ENCODE measurements at regions of chr19 and their contacts with region 1.

Region 1: DNA sequence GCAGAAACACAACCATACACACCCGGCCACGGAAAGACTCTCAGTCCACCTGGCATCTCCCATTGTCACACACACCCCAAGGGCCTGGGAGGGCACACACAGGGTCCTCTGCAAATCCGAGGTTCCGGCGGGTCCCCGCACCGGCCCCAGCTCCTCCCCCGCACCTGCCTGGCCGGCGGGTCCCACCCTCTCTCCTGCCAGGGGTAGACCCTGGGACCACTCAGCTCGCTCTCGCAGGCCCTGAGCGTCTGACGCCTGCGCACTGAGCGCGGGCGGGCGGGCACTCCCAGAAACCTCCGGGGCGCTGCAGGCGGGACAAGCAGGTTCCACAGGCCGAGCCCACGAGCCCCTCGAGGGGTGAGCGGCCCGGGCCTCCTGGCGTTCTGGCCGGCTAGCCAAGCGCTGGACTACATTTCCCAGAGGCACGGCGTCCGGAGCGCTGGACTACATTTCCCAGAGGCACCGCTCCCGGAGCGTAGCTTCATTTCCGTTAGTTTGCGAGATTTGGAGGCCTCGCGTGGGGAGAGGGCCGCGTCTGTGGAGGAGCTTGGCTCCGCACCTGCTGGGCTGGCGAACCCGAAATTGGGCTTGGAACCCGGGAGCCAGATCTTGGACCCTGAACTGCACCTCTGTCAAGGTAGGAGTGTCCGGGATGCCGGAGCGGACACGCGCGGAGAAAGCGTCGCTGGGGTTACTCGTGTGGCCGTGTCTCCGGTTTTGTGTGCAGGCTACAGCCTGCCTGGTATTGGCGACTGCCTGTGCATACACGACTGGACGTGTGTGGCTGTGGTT is at the start of gene ZNF420:
- DNase-seq: peak; percentile 92
- ATAC-seq: peak; percentile 99
- H3K4me3 ChIP-seq: peak within 1 kb of the TSS; percentile 84 to 91 (median 87)
- H3K27ac ChIP-seq: peak within 1 kb of the TSS; percentile 69
- H3K4me1 ChIP-seq: peaks cover 14% of the 10 kb centered on the region
- H3K27me3 ChIP-seq: no peaks in the 10 kb centered on the region; a peak in 1 of 5 replicates
- CTCF ChIP-seq: no peak
- EP300 ChIP-seq: peak; percentile 6 to 12; a peak in 1 of 4 replicates
- POLR2A ChIP-seq: peak; percentile 10 to 77; a peak in 3 of 4 replicates
- RAD21 ChIP-seq: peak; percentile 34; the same call in 1 of the 2 replicates
- total RNA-seq, gene ZNF420: 6.6 and 11.1 TPM in 2 replicates

Region 2: GRCh38 chr19:36214386-36215275 is 863.5 kb before region 1 on chr19 and contains the starts of genes ZNF146 and ZNF565:
- CTCF ChIA-PET with region 1: no interaction called
- POLR2A ChIA-PET with region 1: interaction called, 3 read pairs
- in situ Hi-C with region 1: no loop called
- intact Hi-C with region 1: loop called (anchors 5 kb)
- DNase-seq: peak; percentile 98
- ATAC-seq: peak; percentile 96
- H3K4me3 ChIP-seq: peak within 1 kb of the TSS; percentile 78 to 97 (median 80)
- H3K27ac ChIP-seq: peak within 1 kb of the TSS; percentile 98
- H3K4me1 ChIP-seq: peaks cover 41% of the 10 kb centered on the region
- H3K27me3 ChIP-seq: peaks cover 0 to 3% of the 10 kb centered on the region in 2 experiments; a peak in 1 of 5 replicates
- CTCF ChIP-seq: peak; percentile 4; the same call in 1 of the 2 replicates
- EP300 ChIP-seq: no peak
- POLR2A ChIP-seq: peak; percentile 55 to 91; a peak in 3 of 4 replicates
- RAD21 ChIP-seq: no peak
- total RNA-seq, gene ZNF146: 52.7 and 93.3 TPM in 2 replicates
- total RNA-seq, gene ZNF565: 5.2 and 6.0 TPM in 2 replicates

Region 3: DNA sequence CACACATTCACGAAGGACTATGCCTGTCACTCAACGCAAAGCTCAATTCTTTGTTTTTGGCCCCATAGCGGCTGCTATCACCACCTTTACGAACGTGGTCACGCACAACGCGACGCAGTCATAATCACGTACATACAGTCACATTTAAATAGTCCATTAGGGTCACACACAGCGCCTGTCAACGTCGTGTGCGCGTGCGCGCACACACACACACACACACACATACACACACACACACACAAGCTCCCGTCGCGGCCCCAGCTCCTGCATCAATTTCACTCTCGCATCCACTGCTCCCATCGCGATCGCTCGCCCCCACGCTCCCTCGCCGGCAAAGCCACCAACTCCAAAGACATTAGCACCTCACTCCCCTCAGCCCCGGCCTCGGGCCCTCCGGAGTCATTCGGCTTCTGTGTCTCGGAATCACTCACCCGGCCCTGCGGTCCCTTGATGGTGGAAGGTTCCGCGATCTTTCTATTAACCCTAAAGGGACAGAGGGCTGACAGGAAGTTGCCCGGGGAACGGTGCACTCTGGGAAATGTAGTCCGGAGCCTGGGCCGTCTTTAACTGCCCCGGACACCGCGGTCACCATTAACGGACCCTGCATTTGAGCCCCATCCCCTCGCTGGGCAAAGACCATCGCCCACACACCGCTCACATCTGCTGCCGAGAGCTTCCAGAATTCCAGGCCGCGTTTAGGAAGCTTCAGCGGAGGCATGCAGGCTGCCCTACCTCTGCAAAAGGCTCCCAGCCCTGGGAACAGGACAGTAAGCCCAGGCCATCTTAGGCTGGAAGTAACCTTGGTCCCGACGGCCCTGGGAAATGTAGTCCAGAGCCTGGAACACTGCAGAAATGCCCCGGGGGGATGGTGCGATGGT is 240.0 kb before region 1 on chr19 and contains the start of gene ZNF790:
- CTCF ChIA-PET with region 1: no interaction called
- POLR2A ChIA-PET with region 1: interaction called, 17 read pairs
- in situ Hi-C with region 1: no loop called
- intact Hi-C with region 1: no loop called
- DNase-seq: peak; percentile 89
- ATAC-seq: peak; percentile 96
- H3K4me3 ChIP-seq: peak within 1 kb of the TSS; percentile 77 to 85 (median 84)
- H3K27ac ChIP-seq: peak within 1 kb of the TSS; percentile 86
- H3K4me1 ChIP-seq: peaks cover 19% of the 10 kb centered on the region
- H3K27me3 ChIP-seq: no peaks in the 10 kb centered on the region; a peak in 1 of 5 replicates
- CTCF ChIP-seq: no peak
- EP300 ChIP-seq: 0 out of 4 replicates have a peak, but pooled peaks of 1 of the 2 experiments have one; percentile 16
- POLR2A ChIP-seq: peak; percentile 61 to 78; a peak in 3 of 4 replicates
- RAD21 ChIP-seq: 0 out of 2 replicates have a peak, but pooled peaks have one; percentile 23
- total RNA-seq, gene ZNF790: 5.3 and 8.5 TPM in 2 replicates

Region 4: DNA sequence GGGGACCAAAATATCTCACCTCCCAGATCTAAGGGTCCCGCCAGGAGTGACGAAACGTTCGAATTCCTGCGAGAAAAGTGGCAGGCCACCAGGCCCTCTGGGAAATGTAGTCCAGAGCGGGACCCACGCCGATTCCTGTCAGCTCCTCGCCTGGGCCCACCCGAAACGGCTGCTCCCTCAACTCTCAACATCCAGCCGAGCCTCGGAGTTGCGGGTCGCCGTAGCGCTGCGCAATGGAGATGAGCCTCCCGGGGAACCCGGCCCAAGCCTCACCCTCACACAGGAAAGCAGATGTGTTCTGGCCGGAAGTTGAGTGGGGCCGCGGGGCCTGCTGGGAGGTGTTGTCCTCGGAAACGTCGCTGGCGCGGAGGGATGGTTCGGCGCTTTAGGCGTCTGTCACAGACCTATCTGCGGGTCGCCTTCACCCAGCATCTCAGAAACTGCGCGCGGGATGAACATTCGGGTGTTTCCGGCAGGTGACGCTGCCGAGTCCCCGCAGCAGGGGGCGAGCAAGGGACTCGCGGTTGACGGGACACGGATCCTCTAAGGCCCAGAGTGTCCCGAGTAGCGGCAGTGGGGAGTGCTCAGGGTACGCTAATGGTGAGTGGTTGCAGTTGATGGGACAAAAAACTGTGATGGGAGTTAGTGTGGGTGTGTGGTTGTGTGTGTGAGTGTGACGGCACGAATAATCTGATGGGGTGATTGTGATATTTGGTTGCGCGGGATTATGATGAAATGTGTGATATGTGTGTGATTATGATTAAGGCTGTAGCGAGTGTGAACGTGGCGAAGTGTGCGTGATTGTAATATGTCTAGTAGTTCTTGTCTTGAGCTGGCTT is 161.9 kb before region 1 on chr19 and contains the starts of genes ZNF568 and ZNF829:
- CTCF ChIA-PET with region 1: no interaction called
- POLR2A ChIA-PET with region 1: no interaction called
- in situ Hi-C with region 1: no loop called
- intact Hi-C with region 1: loop called (anchors 1 kb)
- DNase-seq: peak; percentile 69
- ATAC-seq: peak; percentile 98
- H3K4me3 ChIP-seq: peak within 1 kb of the TSS; percentile 63 to 74 (median 73); a peak in 5 of 6 replicates
- H3K27ac ChIP-seq: peak within 1 kb of the TSS; percentile 66
- H3K4me1 ChIP-seq: no peaks in the 10 kb centered on the region
- H3K27me3 ChIP-seq: no peaks in the 10 kb centered on the region
- CTCF ChIP-seq: peak; percentile 76
- EP300 ChIP-seq: no peak
- POLR2A ChIP-seq: no peak
- RAD21 ChIP-seq: no peak
- total RNA-seq, gene ZNF568: 1.00 and 1.9 TPM in 2 replicates
- total RNA-seq, gene ZNF829: 0.86 and 1.6 TPM in 2 replicates

Region 5: DNA sequence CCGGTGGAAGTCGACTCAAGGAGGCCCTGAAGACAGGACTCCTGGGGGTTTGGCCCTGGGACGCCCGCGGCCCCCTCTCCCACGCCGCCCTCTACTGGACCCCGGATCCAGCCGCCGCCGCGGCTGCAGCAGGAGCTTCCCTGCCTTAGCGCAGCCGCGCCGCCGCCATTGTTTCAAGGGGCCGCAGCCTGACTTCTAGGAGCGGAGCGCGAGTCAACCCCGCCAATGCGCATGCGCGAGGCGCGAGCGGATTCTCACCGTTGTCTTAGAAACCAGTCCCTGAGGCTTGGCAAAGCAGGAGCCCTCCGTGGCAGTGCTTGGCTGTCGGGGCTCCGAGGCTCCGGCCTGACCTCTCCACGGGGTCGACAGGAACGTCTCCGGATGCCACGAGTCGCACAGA is 19.0 kb before region 1 on chr19:
- CTCF ChIA-PET with region 1: no interaction called
- POLR2A ChIA-PET with region 1: no interaction called
- in situ Hi-C with region 1: no loop called
- intact Hi-C with region 1: no loop called
- DNase-seq: no peak
- ATAC-seq: no peak
- H3K4me3 ChIP-seq: no peak overlapping the region
- H3K27ac ChIP-seq: no peak overlapping the region
- H3K4me1 ChIP-seq: no peaks in the 10 kb centered on the region
- H3K27me3 ChIP-seq: no peaks in the 10 kb centered on the region
- CTCF ChIP-seq: no peak
- EP300 ChIP-seq: no peak
- POLR2A ChIP-seq: no peak
- RAD21 ChIP-seq: no peak

Region 6: GRCh38 chr19:37136111-37136510 is 58.0 kb after region 1 on chr19:
- CTCF ChIA-PET with region 1: no interaction called
- POLR2A ChIA-PET with region 1: no interaction called
- in situ Hi-C with region 1: no loop called
- intact Hi-C with region 1: loop called (anchors 2 kb)
- DNase-seq: no peak
- ATAC-seq: no peak
- H3K4me3 ChIP-seq: no peak overlapping the region
- H3K27ac ChIP-seq: no peak overlapping the region
- H3K4me1 ChIP-seq: no peaks in the 10 kb centered on the region
- H3K27me3 ChIP-seq: no peaks in the 10 kb centered on the region
- CTCF ChIP-seq: no peak
- EP300 ChIP-seq: no peak
- POLR2A ChIP-seq: no peak
- RAD21 ChIP-seq: no peak

Region 7: GRCh38 chr19:37172368-37173366 is 94.5 kb after region 1 on chr19 and contains the start of gene ZNF585A:
- CTCF ChIA-PET with region 1: no interaction called
- POLR2A ChIA-PET with region 1: interaction called, 4 read pairs
- in situ Hi-C with region 1: no loop called
- intact Hi-C with region 1: loop called (anchors 1 kb)
- DNase-seq: peak; percentile 97
- ATAC-seq: peak; percentile 99
- H3K4me3 ChIP-seq: peak within 1 kb of the TSS; percentile 64 to 95 (median 82)
- H3K27ac ChIP-seq: peak within 1 kb of the TSS; percentile 54
- H3K4me1 ChIP-seq: no peaks in the 10 kb centered on the region; the same call in 1 of the 2 replicates
- H3K27me3 ChIP-seq: no peaks in the 10 kb centered on the region; a peak in 1 of 5 replicates
- CTCF ChIP-seq: peak; percentile 49
- EP300 ChIP-seq: no peak
- POLR2A ChIP-seq: peak; percentile 55 to 68
- RAD21 ChIP-seq: no peak
- total RNA-seq, gene ZNF585A: 7.1 and 14.0 TPM in 2 replicates

Region 8: DNA sequence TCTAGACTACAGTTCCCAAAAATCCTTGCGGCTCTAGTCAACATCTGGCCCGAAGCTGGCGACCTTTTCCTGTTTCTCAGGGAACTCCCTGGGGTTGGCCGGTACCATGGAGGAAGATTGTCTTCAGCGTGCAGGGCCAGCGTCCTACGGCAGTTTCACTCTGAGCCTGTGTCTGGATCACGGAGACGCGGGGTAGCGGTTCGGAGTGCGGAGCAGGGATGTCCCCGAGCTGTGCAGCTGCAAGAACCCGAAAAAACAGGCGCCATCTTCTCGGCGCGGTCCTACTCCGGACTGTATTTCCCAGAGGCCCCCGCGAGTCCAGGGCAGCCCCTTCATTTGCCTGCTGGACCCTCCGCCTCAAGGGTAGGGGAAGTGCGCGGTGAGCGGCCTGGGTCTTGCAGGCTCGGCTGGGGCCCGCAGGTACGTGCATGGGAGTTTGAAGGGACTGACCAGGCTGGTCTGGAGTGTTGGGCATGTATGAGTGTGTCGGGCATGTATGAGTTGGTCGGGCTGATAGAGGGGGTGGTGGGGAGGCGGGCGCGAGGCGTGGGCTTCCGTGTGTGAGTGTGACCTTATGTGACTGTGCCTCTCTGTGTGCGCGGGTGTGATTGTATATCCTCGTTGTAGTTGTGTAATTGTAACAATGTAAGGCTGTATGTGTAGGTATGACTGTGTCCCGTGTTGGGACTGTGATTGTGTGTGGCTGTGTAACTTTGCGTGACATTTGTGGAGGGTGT is 139.9 kb after region 1 on chr19 and contains the start of gene ZNF383:
- CTCF ChIA-PET with region 1: no interaction called
- POLR2A ChIA-PET with region 1: interaction called, 11 read pairs
- in situ Hi-C with region 1: no loop called
- intact Hi-C with region 1: loop called (anchors 5 kb)
- DNase-seq: peak; percentile 92
- ATAC-seq: peak; percentile 99
- H3K4me3 ChIP-seq: peak within 1 kb of the TSS; percentile 85 to 96 (median 88)
- H3K27ac ChIP-seq: peak within 1 kb of the TSS; percentile 89
- H3K4me1 ChIP-seq: peaks cover 12% of the 10 kb centered on the region
- H3K27me3 ChIP-seq: peaks cover 0 to 4% of the 10 kb centered on the region in 2 experiments; a peak in 1 of 5 replicates
- CTCF ChIP-seq: no peak
- EP300 ChIP-seq: no peak
- POLR2A ChIP-seq: peak; percentile 86 to 91
- RAD21 ChIP-seq: peak; percentile 36; the same call in 1 of the 2 replicates
- total RNA-seq, gene ZNF383: 3.7 and 4.1 TPM in 2 replicates